RWPE1 (cell line): ENCODE measurements at regions of chr9 and their contacts with region 1.

Region 1: GRCh38 chr9:117145081-117145480 is 269.8 kb downstream of the ASTN2 start:
- DNase-seq: no peak
- H3K27ac ChIP-seq: no peak overlapping the region
- CTCF ChIP-seq: no peak

Region 2: GRCh38 chr9:117134826-117135500 is 10.1 kb before region 1 on chr9:
- CTCF ChIA-PET with region 1: no interaction called
- POLR2A ChIA-PET with region 1: interaction called, 12 read pairs
- DNase-seq: no peak
- H3K27ac ChIP-seq: no peak overlapping the region
- CTCF ChIP-seq: no peak